ENCODE measurements at regions of chr10 and their contacts with region 1.

Region 1: DNA sequence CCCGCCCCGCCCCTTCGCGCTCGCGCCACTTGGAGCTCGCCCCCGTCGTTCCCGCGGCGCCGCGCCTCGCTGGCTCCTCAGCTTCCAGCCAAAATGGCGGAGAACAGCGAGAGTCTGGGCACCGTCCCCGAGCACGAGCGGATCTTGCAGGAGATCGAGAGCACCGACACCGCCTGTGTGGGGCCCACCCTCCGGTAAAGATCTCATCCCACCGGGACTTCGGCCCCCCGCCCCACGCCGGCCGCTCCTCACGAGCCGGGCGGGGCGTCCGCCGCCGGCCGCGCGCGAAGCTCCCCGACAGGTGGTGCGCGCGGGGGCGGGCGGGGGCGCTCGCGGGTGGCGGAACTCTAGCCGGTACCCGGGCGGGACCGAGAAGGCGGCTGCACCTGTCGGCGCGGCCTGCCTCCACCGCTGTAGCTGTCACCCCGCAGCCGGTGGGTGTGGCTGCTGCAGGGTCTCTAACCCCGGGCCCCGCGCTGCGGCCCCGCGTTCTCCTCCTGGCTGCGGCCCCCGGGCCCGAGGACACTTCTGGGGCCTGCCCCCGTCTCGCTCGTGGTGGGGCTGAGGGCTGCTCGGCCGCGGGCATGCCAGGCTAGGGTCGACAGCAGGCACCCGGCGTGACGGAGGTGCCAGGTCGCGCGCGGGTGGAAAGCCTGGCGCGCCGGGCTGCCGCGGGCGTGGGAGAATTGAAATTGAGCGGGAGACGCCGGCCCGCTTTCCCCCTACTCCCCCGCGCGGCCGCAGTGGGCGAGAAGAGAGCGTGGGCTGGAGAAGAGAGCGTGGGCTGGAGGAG is at the start of gene EXOC6:
- DNase-seq: peak; percentile 87 to 93 (median 93)
- H3K4me3 ChIP-seq: peak within 1 kb of the TSS; percentile 78 to 94 (median 87)
- H3K27ac ChIP-seq: peak within 1 kb of the TSS; percentile 68 to 86
- H3K4me1 ChIP-seq: peaks cover 33 to 54% (median 46%) of the 10 kb centered on the region in 4 experiments
- H3K27me3 ChIP-seq: no peaks in the 10 kb centered on the region

Region 2: GRCh38 chr10:92689663-92690210 is 158.9 kb before region 1 on chr10 and contains the start of gene HHEX:
- CTCF ChIA-PET with region 1: interaction called, 5 read pairs
- POLR2A ChIA-PET with region 1: interaction called, 26 read pairs
- DNase-seq: peak; percentile 75 to 91 (median 84)
- H3K4me3 ChIP-seq: peak within 1 kb of the TSS; percentile 72 to 86 (median 76)
- H3K27ac ChIP-seq: peak within 1 kb of the TSS; percentile 88 to 95
- H3K4me1 ChIP-seq: peaks cover 21 to 54% (median 37%) of the 10 kb centered on the region in 4 experiments
- H3K27me3 ChIP-seq: no peaks in the 10 kb centered on the region

Region 3: DNA sequence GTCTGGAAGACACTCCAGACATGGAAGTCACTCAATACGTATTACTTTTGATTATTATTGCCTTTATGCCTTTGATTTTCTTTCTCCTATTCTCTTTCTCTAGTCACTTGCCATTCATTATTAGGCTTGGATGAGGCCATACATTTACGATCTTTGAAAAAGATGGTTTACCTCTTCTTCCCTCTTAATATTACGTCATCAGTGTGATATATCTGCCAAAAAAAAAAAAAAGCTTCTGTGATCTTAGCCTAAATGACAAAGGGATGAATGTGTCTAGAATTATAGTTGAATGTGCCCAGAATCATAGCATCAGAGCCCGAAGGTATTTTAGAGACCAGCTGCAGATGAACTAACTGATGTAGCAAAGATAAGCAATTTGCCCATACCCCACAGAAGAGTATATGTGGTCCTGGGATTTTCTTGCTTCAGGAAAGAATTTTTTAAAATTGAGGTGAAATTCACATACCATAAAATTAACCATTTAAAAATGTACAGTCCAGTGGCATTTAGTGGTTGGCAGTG is 84.9 kb before region 1 on chr10:
- CTCF ChIA-PET with region 1: no interaction called
- POLR2A ChIA-PET with region 1: no interaction called
- DNase-seq: no peak
- H3K4me3 ChIP-seq: no peak overlapping the region
- H3K27ac ChIP-seq: no peak overlapping the region
- H3K4me1 ChIP-seq: peaks cover 21 to 38% (median 31%) of the 10 kb centered on the region in 4 experiments
- H3K27me3 ChIP-seq: no peaks in the 10 kb centered on the region

Region 4: DNA sequence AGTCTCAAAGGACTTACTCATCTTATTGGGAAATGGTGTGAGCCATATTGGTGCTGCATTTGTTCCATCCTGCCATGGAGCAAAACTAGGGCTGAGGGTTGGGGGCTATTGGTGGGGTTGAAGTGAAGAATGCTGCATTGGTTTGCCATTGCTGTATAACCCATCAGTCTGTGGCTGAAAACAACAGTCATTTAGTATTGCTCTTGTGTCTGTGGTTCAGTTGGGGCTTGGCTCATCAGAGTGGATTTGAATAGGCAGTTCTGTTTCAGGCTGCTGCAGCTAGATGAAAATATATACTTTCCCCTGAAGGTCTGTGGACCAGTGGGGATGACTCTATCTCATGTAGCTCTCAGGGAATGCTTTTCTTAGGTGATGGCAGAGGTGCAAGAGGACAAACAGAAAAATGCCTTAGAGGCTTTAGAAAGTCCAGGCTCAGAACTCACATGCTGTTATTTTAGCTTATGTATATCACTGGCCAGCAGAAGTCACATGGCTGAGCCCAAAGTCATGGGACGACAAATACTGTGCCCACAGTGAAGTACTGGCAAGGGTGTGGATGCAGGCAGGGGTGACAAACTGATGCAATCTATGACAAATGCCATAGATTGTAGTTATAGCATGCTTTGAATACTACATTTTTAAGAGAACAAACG is 15.5 kb before region 1 on chr10:
- CTCF ChIA-PET with region 1: interaction called, 28 read pairs
- POLR2A ChIA-PET with region 1: no interaction called
- DNase-seq: no peak
- H3K4me3 ChIP-seq: no peak overlapping the region
- H3K27ac ChIP-seq: no peak overlapping the region
- H3K4me1 ChIP-seq: peaks cover 0 to 20% (median 13%) of the 10 kb centered on the region in 4 experiments
- H3K27me3 ChIP-seq: no peaks in the 10 kb centered on the region

Region 5: DNA sequence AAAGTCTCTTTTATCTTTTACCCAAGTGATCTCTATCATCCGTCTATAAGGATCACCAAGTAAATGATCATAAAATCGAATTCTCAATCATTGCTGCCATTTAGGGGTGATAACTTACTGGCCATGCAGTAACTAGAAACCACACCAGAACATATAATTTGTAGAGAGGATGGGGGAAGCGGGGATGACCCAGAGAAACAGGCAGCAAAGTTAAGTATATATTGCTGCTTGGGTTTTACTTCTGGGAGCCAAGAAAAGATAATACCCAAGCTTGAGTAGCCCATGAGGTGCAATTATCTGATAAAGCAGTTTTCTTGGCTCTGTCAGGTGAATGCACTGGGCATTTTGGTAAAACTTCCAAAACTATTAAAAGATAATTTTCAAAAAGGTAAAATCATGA is 18.6 kb after region 1 on chr10:
- CTCF ChIA-PET with region 1: interaction called, 69 read pairs
- POLR2A ChIA-PET with region 1: interaction called, 3 read pairs
- DNase-seq: no peak
- H3K4me3 ChIP-seq: no peak overlapping the region
- H3K27ac ChIP-seq: no peak overlapping the region
- H3K4me1 ChIP-seq: peaks cover 0 to 3% (median 1%) of the 10 kb centered on the region in 4 experiments
- H3K27me3 ChIP-seq: no peaks in the 10 kb centered on the region

Region 6: DNA sequence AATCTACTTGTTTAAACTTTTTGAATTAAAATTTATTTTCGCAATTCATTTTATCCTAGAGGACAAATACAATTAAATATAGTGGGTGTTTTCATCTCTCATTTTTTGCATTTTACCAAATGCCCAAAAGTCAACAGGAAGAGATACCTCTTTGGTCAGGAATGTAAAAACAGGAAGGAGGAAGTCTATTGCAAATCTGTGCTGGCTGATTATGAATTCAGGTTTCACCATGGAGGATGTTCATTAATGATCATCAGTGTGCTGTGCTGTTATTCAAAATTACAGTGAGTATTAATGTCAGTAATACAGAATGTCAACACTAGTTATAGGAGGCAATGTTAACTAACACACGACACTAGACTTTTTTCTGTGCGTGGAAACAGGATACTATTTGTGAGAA is 24.4 kb after region 1 on chr10:
- CTCF ChIA-PET with region 1: interaction called, 69 read pairs
- POLR2A ChIA-PET with region 1: interaction called, 3 read pairs
- DNase-seq: peak in 2 of 3 donors; percentile 7 to 30
- H3K4me3 ChIP-seq: no peak overlapping the region
- H3K27ac ChIP-seq: no peak overlapping the region
- H3K4me1 ChIP-seq: peaks cover 17 to 28% (median 23%) of the 10 kb centered on the region in 4 experiments
- H3K27me3 ChIP-seq: no peaks in the 10 kb centered on the region

Region 7: DNA sequence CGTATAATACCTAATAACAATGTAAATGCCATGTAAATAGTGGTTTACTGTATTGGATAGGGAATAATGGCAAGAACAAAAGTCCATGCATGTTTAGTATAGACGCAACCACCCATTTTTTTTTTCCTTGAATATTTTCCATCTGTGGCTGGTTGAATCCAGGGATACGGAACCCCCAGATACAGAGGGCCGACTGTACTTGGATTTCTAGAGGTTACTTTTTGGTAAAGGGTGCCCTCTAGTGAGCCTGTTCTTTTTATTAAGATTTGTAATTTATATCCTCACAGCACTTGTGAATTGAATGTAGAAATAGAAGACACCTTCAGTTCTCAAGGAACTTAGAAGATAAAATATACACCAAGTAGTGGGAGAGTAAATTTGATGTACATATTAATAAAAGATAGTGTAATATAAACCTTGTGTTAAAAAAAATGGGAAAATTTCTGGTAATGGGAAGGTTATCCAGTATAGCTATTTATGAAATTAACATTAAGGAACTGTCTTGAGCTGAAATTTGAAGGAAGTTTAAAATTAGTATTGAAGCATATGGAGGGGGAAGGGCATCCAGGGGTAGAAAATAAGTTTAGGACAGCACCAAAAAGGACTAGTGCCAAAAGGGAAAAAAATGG is 31.7 kb after region 1 on chr10:
- CTCF ChIA-PET with region 1: interaction called, 20 read pairs
- POLR2A ChIA-PET with region 1: interaction called, 5 read pairs
- DNase-seq: peak; percentile 68 to 77 (median 69)
- H3K4me3 ChIP-seq: no peak overlapping the region
- H3K27ac ChIP-seq: no peak overlapping the region
- H3K4me1 ChIP-seq: peaks cover 15 to 34% (median 21%) of the 10 kb centered on the region in 4 experiments
- H3K27me3 ChIP-seq: no peaks in the 10 kb centered on the region

Region 8: GRCh38 chr10:93080350-93081046 is 231.9 kb after region 1 on chr10:
- CTCF ChIA-PET with region 1: no interaction called
- POLR2A ChIA-PET with region 1: no interaction called
- DNase-seq: peak; percentile 42 to 61 (median 55)
- H3K4me3 ChIP-seq: peak overlapping the region in 3 of 7 experiments; percentile 15 to 57 (median 50)
- H3K27ac ChIP-seq: no peak overlapping the region
- H3K4me1 ChIP-seq: peaks cover 0 to 6% (median 4%) of the 10 kb centered on the region in 4 experiments
- H3K27me3 ChIP-seq: peaks cover 8 to 57% (median 21%) of the 10 kb centered on the region in 5 experiments

Region 9: GRCh38 chr10:93622942-93623341 is 774.3 kb after region 1 on chr10:
- CTCF ChIA-PET with region 1: no interaction called
- POLR2A ChIA-PET with region 1: no interaction called
- DNase-seq: no peak
- H3K4me3 ChIP-seq: no peak overlapping the region
- H3K27ac ChIP-seq: no peak overlapping the region
- H3K4me1 ChIP-seq: no peaks in the 10 kb centered on the region
- H3K27me3 ChIP-seq: peaks cover 0 to 2% (median 0%) of the 10 kb centered on the region in 5 experiments